ENCODE measurements at regions of chr2 and their contacts with region 1.

Region 1: GRCh38 chr2:112481050-112481527 is 867 bp upstream of the TTL start:
- DNase-seq: peak; percentile 87
- H3K4me3 Mint-ChIP-seq: peak overlapping the region; percentile 88
- H3K27ac Mint-ChIP-seq: peak overlapping the region; percentile 86
- H3K4me1 Mint-ChIP-seq: peaks cover 15% of the 10 kb centered on the region
- H3K27me3 Mint-ChIP-seq: no peaks in the 10 kb centered on the region
- CTCF ChIP-seq: peak; percentile 86

Region 2: GRCh38 chr2:112493858-112494648 is 13.0 kb after region 1 on chr2:
- CTCF ChIA-PET with region 1: interaction called, 14 read pairs
- POLR2A ChIA-PET with region 1: interaction called, 42 read pairs
- intact Hi-C with region 1: no loop called
- DNase-seq: peak; percentile 60
- H3K4me3 Mint-ChIP-seq: no peak overlapping the region
- H3K27ac Mint-ChIP-seq: no peak overlapping the region
- H3K4me1 Mint-ChIP-seq: no peaks in the 10 kb centered on the region
- H3K27me3 Mint-ChIP-seq: no peaks in the 10 kb centered on the region
- CTCF ChIP-seq: no peak

Region 3: GRCh38 chr2:112542123-112542983 is 61.3 kb after region 1 on chr2 and contains the start of gene POLR1B:
- CTCF ChIA-PET with region 1: interaction called, 4 read pairs
- POLR2A ChIA-PET with region 1: interaction called, 23 read pairs
- intact Hi-C with region 1: loop called (anchors 1 kb)
- DNase-seq: peak; percentile 90
- H3K4me3 Mint-ChIP-seq: no peak within 1 kb of the TSS
- H3K27ac Mint-ChIP-seq: no peak within 1 kb of the TSS
- H3K4me1 Mint-ChIP-seq: peaks cover 11% of the 10 kb centered on the region
- H3K27me3 Mint-ChIP-seq: no peaks in the 10 kb centered on the region
- CTCF ChIP-seq: no peak
- total RNA-seq, gene POLR1B: 51.6 and 74.0 TPM in 2 replicates

Measured in MCF 10A (cell line).